ENCODE measurements at regions of chr4 and their contacts with region 1.

Region 1: GRCh38 chr4:118746292-118746919 is 61.2 kb downstream of the METTL14 start:
- DNase-seq: no peak
- CTCF ChIP-seq: no peak

Region 2: DNA sequence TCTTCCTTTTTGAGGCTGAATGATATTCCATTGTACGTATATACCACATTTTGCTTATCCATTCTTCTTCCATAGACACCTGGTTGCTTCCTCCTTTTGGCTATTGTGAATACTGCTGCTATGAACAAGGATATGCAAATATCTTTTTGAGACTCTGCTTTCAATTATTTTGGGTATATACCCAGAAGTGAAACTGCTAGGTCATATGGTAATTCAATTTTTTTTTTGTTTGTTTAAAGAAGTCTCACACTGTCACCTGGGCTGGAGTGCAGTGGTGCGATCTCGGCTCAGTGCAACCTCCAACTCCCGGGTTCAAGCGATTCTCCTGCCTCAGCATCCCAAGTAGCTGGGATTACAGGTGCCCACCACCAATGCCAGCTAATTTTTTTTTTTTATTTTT is 14.1 kb after region 1 on chr4:
- CTCF ChIA-PET with region 1: interaction called, 14 read pairs
- POLR2A ChIA-PET with region 1: interaction called, 3 read pairs
- DNase-seq: no peak
- CTCF ChIP-seq: no peak

Measured in GM10248 (cell line).